Activated CD4-positive, alpha-beta T cell treated with anti-CD3 and anti-CD28 coated beads, Interleukin-2, amount 10 ng/mL, durations not matched to agents 7 days and 5 days (primary cell): ENCODE measurements at regions of chr12 and their contacts with region 1.

Region 1: DNA sequence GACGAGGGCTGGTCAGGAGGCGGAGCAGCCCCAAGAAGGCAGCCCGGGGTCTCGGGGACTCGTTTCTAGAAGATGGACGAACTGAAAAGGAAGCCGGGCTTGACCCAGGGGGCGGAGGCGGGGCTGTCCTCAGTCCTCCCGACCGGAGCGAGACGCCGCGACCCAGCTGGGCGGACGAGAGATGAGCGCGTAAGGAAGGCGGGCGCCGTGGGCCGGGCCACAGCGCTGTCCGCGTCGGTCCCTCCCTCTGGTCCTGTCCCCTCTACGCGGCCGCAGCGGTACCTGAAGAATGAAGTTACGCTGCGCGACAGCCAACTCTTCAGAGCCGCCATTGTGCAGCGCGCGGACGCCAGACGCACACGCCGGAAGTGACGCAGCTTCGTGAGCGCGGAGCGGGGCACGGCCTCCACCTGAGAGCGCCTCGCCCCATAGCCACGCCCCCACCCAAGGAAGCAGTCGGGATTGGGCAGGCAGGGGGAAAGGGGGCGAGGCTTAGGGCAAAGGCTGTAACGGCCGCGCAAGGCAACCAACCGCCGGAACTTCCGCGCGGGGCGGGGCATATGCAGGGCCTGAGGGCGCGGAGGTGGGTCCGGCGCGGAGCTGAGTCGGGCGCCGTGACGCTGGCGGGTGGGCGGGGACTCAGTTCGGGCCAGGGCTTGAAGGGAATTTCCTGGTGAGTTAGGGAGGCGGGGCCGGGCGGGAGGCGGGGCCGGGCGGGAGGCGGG is at the start of gene DIABLO:
- DNase-seq: peak; percentile 100
- H3K4me3 Mint-ChIP-seq: peak within 1 kb of the TSS; percentile 92
- H3K27ac Mint-ChIP-seq: peak within 1 kb of the TSS; percentile 96
- H3K4me1 Mint-ChIP-seq: peaks cover 40% of the 10 kb centered on the region
- H3K27me3 Mint-ChIP-seq: no peaks in the 10 kb centered on the region
- total RNA-seq, gene DIABLO: 36.1 to 37.7 TPM

Region 2: DNA sequence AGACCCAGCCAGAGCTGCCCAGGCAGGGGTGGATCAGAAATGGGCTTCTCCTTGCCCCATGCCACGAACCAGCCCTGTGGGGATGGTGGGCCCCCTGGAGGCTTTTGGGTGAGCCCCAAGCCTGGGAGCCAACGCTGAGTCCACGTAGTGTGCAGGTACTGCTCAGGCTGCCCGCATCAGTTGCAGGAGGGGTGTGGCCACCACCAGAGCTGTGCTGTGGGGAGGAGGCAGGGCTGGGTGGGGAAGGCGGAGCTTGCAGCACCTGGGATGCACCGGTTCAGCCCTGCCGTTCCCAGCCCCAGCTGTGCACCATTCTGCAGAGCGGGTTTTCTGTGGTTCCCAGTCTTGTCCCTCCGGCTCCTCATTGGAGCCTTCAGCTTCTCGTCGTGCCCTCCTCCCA is 88.2 kb before region 1 on chr12:
- CTCF ChIA-PET with region 1: no interaction called
- POLR2A ChIA-PET with region 1: no interaction called
- DNase-seq: no peak
- H3K4me3 Mint-ChIP-seq: no peak overlapping the region
- H3K27ac Mint-ChIP-seq: no peak overlapping the region
- H3K4me1 Mint-ChIP-seq: no peaks in the 10 kb centered on the region
- H3K27me3 Mint-ChIP-seq: no peaks in the 10 kb centered on the region

Region 3: GRCh38 chr12:122205063-122205925 is 20.6 kb before region 1 on chr12:
- CTCF ChIA-PET with region 1: interaction called, 11 read pairs
- POLR2A ChIA-PET with region 1: interaction called, 3 read pairs
- DNase-seq: no peak
- H3K4me3 Mint-ChIP-seq: peak overlapping the region; percentile 57
- H3K27ac Mint-ChIP-seq: no peak overlapping the region
- H3K4me1 Mint-ChIP-seq: peaks cover 13% of the 10 kb centered on the region
- H3K27me3 Mint-ChIP-seq: peaks cover 26% of the 10 kb centered on the region

Region 4: DNA sequence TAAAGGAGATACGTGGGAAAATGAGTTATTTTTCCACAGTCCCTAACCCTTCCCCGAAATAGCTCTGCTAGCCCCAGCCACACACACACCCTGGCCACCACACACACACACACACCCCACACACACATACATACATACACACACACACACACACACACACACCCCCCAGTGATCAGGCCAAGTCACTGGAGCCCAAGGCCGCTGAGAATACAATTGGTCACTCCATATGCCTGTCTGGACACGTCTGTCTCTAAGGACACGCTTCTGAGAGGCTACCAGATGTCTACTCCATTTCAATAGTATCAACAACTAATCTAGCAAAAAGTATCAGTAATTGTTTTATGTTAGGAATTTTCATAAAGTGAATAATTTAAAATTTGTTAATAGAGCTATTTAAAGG is 13.0 kb after region 1 on chr12:
- CTCF ChIA-PET with region 1: interaction called, 12 read pairs
- POLR2A ChIA-PET with region 1: no interaction called
- DNase-seq: no peak
- H3K4me3 Mint-ChIP-seq: no peak overlapping the region
- H3K27ac Mint-ChIP-seq: no peak overlapping the region
- H3K4me1 Mint-ChIP-seq: peaks cover 5% of the 10 kb centered on the region
- H3K27me3 Mint-ChIP-seq: no peaks in the 10 kb centered on the region

Region 5: GRCh38 chr12:122399592-122400373 is 173.9 kb after region 1 on chr12:
- CTCF ChIA-PET with region 1: no interaction called
- POLR2A ChIA-PET with region 1: no interaction called
- DNase-seq: peak; percentile 71
- H3K4me3 Mint-ChIP-seq: peak overlapping the region; percentile 41
- H3K27ac Mint-ChIP-seq: peak overlapping the region; percentile 85
- H3K4me1 Mint-ChIP-seq: peaks cover 48% of the 10 kb centered on the region
- H3K27me3 Mint-ChIP-seq: no peaks in the 10 kb centered on the region